Heart left ventricle (tissue), 16 donors: ENCODE measurements at regions of chr3 and their contacts with region 1.

Region 1: DNA sequence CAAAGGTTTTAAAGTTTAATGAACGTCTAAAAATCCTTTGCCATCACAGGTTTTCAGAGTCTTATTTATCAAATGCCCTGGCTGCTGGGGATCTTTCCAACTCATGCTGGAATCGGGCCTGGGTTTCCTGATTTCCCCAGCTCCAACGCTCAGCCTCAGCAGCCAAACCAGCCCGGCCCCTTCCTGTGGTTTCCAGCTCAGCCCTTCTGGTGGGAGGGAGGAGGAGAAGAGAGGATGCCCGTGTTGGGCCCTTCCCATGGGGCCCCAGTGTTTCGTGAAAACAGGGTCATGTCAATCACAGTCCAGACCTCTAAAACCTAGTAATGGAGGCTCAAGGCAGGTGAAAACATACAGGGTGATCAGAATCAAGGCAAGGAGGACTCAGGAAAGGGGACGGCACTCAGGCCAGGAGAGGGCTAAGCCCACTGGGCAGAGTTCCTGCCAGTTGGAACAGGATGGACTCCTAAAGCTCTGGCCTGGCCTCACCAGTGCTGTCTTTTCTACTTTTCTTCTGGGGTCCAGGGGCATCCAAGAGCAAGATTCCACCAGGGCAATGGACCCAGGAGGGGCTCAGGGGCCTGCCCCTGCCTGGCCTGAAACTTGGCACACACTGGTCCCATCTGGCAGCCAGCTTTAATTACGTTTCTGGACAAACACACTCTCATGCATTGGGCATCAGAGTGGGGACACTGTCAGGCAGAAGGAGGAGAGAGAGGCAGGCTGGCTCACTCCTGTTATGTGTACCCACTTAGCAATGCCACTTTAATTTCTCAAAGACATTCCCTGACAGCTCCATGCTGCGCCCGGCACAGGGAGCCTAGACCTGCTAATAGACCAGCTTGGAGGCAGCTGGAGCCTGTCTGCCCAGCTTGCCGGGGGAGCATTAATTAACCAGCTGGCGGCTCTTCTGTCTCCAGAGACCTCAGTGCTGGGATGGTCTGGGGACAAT is 194.6 kb downstream of the FAM43A start:
- DNase-seq: peak; percentile 77 to 86 (median 82)
- ATAC-seq: peak; percentile 44 to 83 (median 72)
- H3K4me3 ChIP-seq: no peak overlapping the region
- H3K27ac ChIP-seq: peak overlapping the region; percentile 54 to 90 (median 81)
- H3K4me1 ChIP-seq: peaks cover 5 to 82% (median 50%) of the 10 kb centered on the region in 12 donors
- H3K27me3 ChIP-seq: no peaks in the 10 kb centered on the region
- CTCF ChIP-seq: no peak
- POLR2A ChIP-seq: no peak

Region 2: DNA sequence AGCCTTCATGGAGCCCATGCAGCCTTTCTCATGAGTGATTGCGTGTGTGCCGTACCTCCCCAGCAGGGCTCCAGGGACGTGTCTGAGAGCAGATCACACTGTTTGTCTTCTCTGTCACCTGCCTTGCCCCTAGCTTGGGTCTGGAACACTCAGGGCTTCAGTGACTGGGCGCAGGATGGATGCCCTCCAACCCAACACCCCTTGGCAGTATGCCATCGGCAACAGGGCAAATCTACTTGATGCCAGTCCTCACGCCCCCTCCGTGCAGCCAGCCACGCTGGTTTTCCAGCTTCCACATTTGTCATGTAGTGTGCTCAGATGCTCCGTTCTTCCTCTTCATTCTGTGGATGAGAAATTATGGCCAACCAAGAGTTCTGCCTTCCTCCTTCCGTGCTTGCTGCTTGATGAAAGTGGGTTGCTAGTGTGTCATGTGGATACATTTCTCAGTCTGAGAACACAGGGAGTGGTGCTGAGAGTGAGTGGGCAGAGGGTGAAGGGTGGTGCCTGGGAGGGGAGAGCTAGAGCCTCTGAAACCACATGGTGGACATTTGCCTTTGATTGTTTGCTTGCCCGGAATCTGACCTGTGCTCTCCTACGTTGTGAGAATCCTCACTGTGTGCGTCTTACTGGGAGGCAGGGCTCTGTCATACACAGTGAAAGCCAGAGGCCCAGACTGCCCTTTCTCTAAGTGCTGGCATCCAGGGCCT is 97.4 kb before region 1 on chr3:
- intact Hi-C with region 1: loop called in 1 of 10 experiments (anchors 5 kb)
- DNase-seq: no peak
- ATAC-seq: peak; percentile 34 to 61 (median 55)
- H3K4me3 ChIP-seq: no peak overlapping the region
- H3K27ac ChIP-seq: peak overlapping the region in 7 of 12 donors; percentile 2 to 72 (median 31)
- H3K4me1 ChIP-seq: peaks cover 0 to 37% (median 22%) of the 10 kb centered on the region in 12 donors
- H3K27me3 ChIP-seq: no peaks in the 10 kb centered on the region
- CTCF ChIP-seq: no peak
- POLR2A ChIP-seq: no peak

Region 3: GRCh38 chr3:194800002-194800401 is 80.3 kb before region 1 on chr3:
- intact Hi-C with region 1: no loop called
- DNase-seq: no peak
- ATAC-seq: no peak
- H3K4me3 ChIP-seq: no peak overlapping the region
- H3K27ac ChIP-seq: no peak overlapping the region
- H3K4me1 ChIP-seq: no peaks in the 10 kb centered on the region
- H3K27me3 ChIP-seq: no peaks in the 10 kb centered on the region
- CTCF ChIP-seq: no peak
- POLR2A ChIP-seq: no peak

Region 4: DNA sequence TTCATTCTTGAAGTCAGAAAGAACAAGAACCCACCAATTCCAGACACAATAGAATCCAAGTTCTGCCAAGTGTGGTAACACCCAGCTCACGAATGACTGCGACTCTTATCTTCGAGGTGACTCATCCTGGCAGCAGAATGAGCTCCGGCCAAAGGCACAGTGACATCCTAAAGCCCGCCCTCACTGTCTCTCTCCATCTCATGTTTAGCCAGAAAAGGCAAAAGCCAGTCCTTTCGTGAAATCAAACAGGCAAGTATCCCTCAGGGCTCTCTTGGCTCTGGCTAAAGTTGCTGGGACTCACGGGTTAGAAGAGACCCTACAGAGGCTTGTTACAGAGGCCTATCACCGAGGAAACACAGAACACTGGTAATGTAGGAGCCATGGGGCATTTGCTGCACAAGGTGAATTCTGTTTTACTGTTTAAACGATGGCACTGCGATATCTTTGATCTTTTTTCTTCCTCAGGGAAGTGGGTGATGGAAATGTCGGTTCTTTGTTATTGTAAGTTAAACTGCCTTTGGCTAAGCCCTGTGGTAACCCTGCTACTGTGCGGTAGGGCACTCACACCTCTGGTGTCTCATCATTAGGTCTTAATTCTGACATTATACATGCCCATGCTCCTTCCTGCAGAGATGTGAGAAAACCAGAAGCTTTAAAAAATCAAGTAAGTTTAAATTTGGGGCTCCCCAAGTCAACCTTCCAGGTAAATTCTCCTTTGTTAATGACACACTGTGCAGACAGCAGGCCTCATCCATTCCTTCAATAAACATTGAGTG is 39.0 kb before region 1 on chr3:
- intact Hi-C with region 1: no loop called
- DNase-seq: peak in 3 of 5 donors; percentile 27 to 69 (median 42)
- ATAC-seq: peak in 3 of 4 donors; percentile 86 to 94 (median 87)
- H3K4me3 ChIP-seq: no peak overlapping the region
- H3K27ac ChIP-seq: peak overlapping the region in 3 of 12 donors; percentile 15 to 49 (median 33)
- H3K4me1 ChIP-seq: peaks cover 0 to 15% (median 6%) of the 10 kb centered on the region in 12 donors
- H3K27me3 ChIP-seq: no peaks in the 10 kb centered on the region
- CTCF ChIP-seq: no peak
- POLR2A ChIP-seq: no peak

Region 5: GRCh38 chr3:194930377-194931204 is 50.3 kb after region 1 on chr3:
- intact Hi-C with region 1: loop called in 5 of 10 experiments (anchors 5 to 10 kb)
- DNase-seq: peak in 4 of 5 donors; percentile 49 to 70 (median 58)
- ATAC-seq: peak; percentile 62 to 86 (median 78)
- H3K4me3 ChIP-seq: no peak overlapping the region
- H3K27ac ChIP-seq: peak overlapping the region; percentile 56 to 89 (median 74)
- H3K4me1 ChIP-seq: peaks cover 12 to 58% (median 32%) of the 10 kb centered on the region in 12 donors
- H3K27me3 ChIP-seq: no peaks in the 10 kb centered on the region
- CTCF ChIP-seq: no peak
- POLR2A ChIP-seq: no peak

Region 6: DNA sequence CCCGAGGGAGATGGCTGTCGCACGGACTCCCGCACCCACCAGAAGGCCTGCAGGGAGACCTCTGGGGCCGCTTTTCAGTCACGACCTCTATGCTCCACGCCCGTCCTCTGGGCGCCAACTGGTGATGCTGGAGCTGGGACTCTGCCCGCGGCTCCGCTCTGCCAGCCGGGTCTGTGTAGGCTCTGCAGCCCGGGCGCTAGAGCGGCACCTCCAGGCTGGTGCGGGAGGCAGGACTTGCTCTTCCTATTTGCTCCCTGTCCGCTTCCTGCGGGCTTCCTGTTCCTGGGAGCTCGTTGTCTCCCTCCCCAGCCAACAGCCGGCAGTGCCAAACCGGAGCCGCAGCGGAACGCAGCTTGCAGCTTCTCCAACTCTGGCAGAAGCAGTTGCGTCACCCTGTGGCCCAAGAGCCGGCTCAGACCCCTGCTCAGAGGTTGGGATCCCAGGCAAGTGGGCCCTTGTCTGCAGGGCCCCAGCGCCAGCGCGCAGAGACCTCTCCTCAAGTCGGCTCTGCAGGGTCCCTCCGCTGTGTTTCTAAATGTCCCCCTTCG is 104.8 kb after region 1 on chr3:
- intact Hi-C with region 1: no loop called
- DNase-seq: peak; percentile 69 to 92 (median 80)
- ATAC-seq: peak; percentile 82 to 96 (median 91)
- H3K4me3 ChIP-seq: peak overlapping the region in 10 of 12 donors; percentile 20 to 46 (median 36)
- H3K27ac ChIP-seq: peak overlapping the region in 4 of 12 donors; percentile 1 to 55 (median 31)
- H3K4me1 ChIP-seq: peaks cover 0 to 15% (median 13%) of the 10 kb centered on the region in 12 donors
- H3K27me3 ChIP-seq: no peaks in the 10 kb centered on the region
- CTCF ChIP-seq: peak; percentile 19 to 61 (median 46)
- POLR2A ChIP-seq: no peak